ENCODE measurements at regions of chr13 and their contacts with region 1.

Region 1: GRCh38 chr13:49922301-49922700 is 13.8 kb downstream of the SPRYD7 start:
- DNase-seq: no peak
- H3K4me3 ChIP-seq: no peak overlapping the region
- H3K27ac ChIP-seq: no peak overlapping the region
- H3K4me1 ChIP-seq: no peaks in the 10 kb centered on the region
- H3K27me3 ChIP-seq: no peaks in the 10 kb centered on the region
- CTCF ChIP-seq: no peak
- EP300 ChIP-seq: no peak
- RAD21 ChIP-seq: no peak

Region 2: DNA sequence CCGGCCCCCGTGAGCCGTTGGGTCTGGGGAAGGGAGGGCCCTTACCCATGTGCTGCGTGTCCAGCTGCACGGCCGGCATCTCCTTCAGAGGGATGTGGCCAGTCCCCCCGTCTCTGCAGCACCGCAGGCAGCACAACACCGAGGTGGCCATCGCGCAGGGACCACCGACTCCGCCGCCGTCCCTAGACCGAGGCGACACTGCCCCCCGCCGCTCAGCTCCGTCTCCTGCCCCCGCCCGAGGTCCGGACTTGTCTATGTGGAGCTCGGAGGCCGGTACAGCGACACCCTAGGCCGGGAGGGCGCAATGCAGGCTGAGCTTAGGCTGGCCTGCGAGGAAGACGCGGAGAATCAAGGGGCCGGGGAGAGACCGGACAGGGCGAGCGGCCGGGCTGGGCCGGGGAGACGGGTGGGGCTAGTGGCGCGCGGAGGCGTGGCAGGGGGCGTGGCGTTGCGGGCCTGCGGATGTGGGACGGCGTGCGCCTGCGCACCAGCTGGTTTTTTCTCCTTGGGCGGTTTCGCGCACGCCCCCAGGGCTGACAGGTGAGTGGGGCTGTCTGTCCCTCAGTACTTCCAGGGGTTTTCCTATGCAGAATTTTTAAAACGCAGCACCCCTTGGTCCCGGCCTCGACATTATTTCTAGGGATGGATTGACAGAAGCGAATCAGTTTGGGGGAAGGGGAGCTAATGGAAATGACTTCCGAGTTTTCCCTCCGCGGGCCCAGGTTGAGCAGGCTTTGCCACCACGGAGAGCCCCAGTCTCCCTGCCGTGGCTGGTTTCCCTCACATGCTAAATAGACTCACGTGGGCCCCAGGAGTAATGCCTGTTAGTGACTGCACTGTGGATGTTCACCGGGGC is 14.0 kb after region 1 on chr13 and contains the start of gene SPRYD7:
- CTCF ChIA-PET with region 1: interaction called, 11 read pairs
- POLR2A ChIA-PET with region 1: no interaction called
- DNase-seq: peak; percentile 98
- H3K4me3 ChIP-seq: peak within 1 kb of the TSS; percentile 80 to 93
- H3K27ac ChIP-seq: peak within 1 kb of the TSS; percentile 58 to 82
- H3K4me1 ChIP-seq: peaks cover 0 to 7% of the 10 kb centered on the region in 2 experiments; a peak in 3 of 4 replicates
- H3K27me3 ChIP-seq: no peaks in the 10 kb centered on the region
- CTCF ChIP-seq: peak; percentile 84
- EP300 ChIP-seq: peak in 1 of 2 experiments; percentile 35; a peak in 1 of 4 replicates
- RAD21 ChIP-seq: peak; percentile 46
- polyA plus RNA-seq, gene SPRYD7: 5.5 and 8.6 TPM in 2 replicates

Measured in SK-N-SH (cell line).